GM12878 (cell line): ENCODE measurements at regions of chr1 and their contacts with region 1.

Region 1: DNA sequence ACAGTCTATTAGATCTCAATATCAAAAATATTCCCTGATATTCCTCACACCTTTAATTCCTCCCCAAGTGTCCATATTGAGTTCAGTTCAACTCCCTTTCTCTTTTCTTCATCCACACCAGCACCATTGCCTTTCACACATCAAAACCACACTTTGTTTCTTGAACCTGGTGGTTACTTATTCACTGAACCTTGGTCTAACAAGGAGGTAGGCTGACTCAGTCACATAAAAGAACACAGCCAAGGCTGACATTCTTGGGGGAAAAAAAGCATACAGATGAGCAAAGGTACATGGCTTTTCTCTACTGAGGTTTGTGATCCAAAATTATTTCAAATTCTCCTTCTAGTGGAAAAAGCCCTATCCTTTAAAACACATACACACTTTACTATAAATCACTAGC is 131.7 kb upstream of the USH2A start:
- DNase-seq: no peak
- ATAC-seq: no peak
- H3K4me3 ChIP-seq: no peak overlapping the region
- H3K27ac ChIP-seq: no peak overlapping the region
- H3K4me1 ChIP-seq: no peaks in the 10 kb centered on the region
- H3K27me3 ChIP-seq: no peaks in the 10 kb centered on the region
- CTCF ChIP-seq: no peak
- EP300 ChIP-seq: no peak
- POLR2A ChIP-seq: no peak
- RAD21 ChIP-seq: no peak

Region 2: GRCh38 chr1:216542263-216542662 is 12.7 kb before region 1 on chr1:
- CTCF ChIA-PET with region 1: no interaction called
- POLR2A ChIA-PET with region 1: no interaction called
- RAD21 ChIA-PET with region 1: no interaction called
- SMC1A ChIA-PET with region 1: no interaction called
- in situ Hi-C with region 1: no loop called
- intact Hi-C with region 1: no loop called
- DNase-seq: no peak
- ATAC-seq: no peak
- H3K4me3 ChIP-seq: no peak overlapping the region
- H3K27ac ChIP-seq: no peak overlapping the region
- H3K4me1 ChIP-seq: no peaks in the 10 kb centered on the region
- H3K27me3 ChIP-seq: no peaks in the 10 kb centered on the region
- CTCF ChIP-seq: no peak
- EP300 ChIP-seq: no peak
- POLR2A ChIP-seq: no peak
- RAD21 ChIP-seq: no peak

Region 3: DNA sequence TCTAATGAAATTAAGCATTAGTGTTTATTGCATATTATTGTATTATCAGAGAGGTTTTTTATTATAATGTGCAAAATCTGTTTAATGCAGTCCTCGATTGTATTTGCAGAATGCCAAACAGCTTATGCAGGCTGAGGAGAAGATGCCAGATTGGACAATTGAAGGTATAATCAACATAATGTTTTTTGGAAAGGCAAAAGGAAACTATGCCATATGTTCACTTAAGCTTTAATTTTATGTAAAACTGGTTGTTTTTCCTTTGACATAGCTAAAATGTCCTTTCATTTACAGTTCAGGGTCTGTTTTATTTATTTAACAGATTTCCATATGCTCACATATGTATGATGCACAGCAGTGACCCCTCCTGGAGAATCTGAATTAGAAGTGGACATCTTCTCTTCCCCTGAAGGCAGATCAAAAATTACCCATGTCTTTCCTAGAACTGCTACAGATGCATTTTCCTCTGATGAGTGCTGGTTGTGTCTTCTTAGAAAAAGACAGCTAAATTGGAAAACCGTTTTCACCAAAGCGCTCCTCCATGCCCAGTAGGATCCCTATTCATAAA is 11.8 kb after region 1 on chr1:
- CTCF ChIA-PET with region 1: interaction called, 30 read pairs
- POLR2A ChIA-PET with region 1: no interaction called
- RAD21 ChIA-PET with region 1: no interaction called
- SMC1A ChIA-PET with region 1: interaction called, 4 read pairs
- in situ Hi-C with region 1: no loop called
- intact Hi-C with region 1: no loop called
- DNase-seq: no peak
- ATAC-seq: peak; percentile 48; the same call in 1 of the 3 replicates
- H3K4me3 ChIP-seq: no peak overlapping the region
- H3K27ac ChIP-seq: no peak overlapping the region
- H3K4me1 ChIP-seq: no peaks in the 10 kb centered on the region
- H3K27me3 ChIP-seq: no peaks in the 10 kb centered on the region
- CTCF ChIP-seq: peak; percentile 16 to 35 (median 20); a peak in 2 of 6 replicates
- EP300 ChIP-seq: no peak
- POLR2A ChIP-seq: no peak
- RAD21 ChIP-seq: peak; percentile 46